ENCODE measurements at regions of chr5 and their contacts with region 1.

Region 1: GRCh38 chr5:72908664-72909063 is 47.2 kb upstream of the FCHO2 start:
- DNase-seq: no peak
- H3K4me3 ChIP-seq: no peak overlapping the region
- H3K27ac ChIP-seq: no peak overlapping the region
- H3K4me1 ChIP-seq: peaks cover 0 to 4% (median 0%) of the 10 kb centered on the region in 4 donors
- H3K27me3 ChIP-seq: no peaks in the 10 kb centered on the region
- CTCF ChIP-seq: no peak
- EP300 ChIP-seq: no peak
- POLR2A ChIP-seq: no peak

Region 2: GRCh38 chr5:73066466-73066865 is 157.8 kb after region 1 on chr5:
- intact Hi-C with region 1: loop called (anchors 10 kb)
- DNase-seq: no peak
- H3K4me3 ChIP-seq: no peak overlapping the region
- H3K27ac ChIP-seq: no peak overlapping the region
- H3K4me1 ChIP-seq: no peaks in the 10 kb centered on the region
- H3K27me3 ChIP-seq: no peaks in the 10 kb centered on the region
- CTCF ChIP-seq: no peak
- EP300 ChIP-seq: no peak
- POLR2A ChIP-seq: no peak

Measured in sigmoid colon (tissue), 7 donors.